H1 (cell line): ENCODE measurements at regions of chr12 and their contacts with region 1.

Region 1: GRCh38 chr12:52268212-52268611 is 6.2 kb upstream of the KRT86 start:
- DNase-seq: no peak
- H3K4me3 ChIP-seq: no peak overlapping the region
- H3K27ac ChIP-seq: no peak overlapping the region
- H3K4me1 ChIP-seq: no peaks in the 10 kb centered on the region
- H3K27me3 ChIP-seq: no peaks in the 10 kb centered on the region; a peak in 1 of 7 replicates
- CTCF ChIP-seq: no peak
- EP300 ChIP-seq: no peak
- POLR2A ChIP-seq: no peak
- RAD21 ChIP-seq: no peak

Region 2: DNA sequence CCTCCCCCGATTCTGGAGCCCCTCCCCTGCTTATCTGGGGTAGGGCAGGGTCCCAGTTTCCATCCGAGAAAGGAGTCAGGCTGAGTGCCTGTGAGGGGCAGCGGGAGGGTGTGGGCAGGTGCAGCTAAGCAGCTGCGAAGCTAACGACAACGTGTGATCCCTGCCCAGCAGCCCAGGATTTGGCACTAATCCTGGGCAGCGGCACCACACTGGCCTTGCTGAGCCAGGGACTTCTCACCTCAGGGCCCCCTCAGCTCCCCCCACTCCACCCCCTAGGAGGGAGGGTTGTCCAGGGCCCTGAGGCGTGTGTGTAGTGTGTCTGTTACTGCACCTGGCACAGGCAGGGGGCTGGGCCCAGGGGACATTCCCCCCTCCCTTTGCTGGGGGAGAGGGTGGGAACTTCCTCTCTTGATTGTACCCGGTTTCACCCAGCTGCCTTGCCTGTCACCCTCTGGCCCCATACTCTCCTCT is 186.9 kb before region 1 on chr12:
- CTCF ChIA-PET with region 1: no interaction called
- POLR2A ChIA-PET with region 1: no interaction called
- DNase-seq: no peak
- H3K4me3 ChIP-seq: no peak overlapping the region
- H3K27ac ChIP-seq: no peak overlapping the region
- H3K4me1 ChIP-seq: peaks cover 5 to 37% (median 14%) of the 10 kb centered on the region in 4 experiments; a peak in 6 of 7 replicates
- H3K27me3 ChIP-seq: peaks cover 0 to 14% (median 1%) of the 10 kb centered on the region in 4 experiments; a peak in 5 of 7 replicates
- CTCF ChIP-seq: no peak
- EP300 ChIP-seq: no peak
- POLR2A ChIP-seq: no peak
- RAD21 ChIP-seq: no peak

Region 3: GRCh38 chr12:52249051-52249461 is 19.2 kb before region 1 on chr12:
- CTCF ChIA-PET with region 1: interaction called, 40 read pairs
- POLR2A ChIA-PET with region 1: no interaction called
- DNase-seq: no peak
- H3K4me3 ChIP-seq: no peak overlapping the region
- H3K27ac ChIP-seq: no peak overlapping the region
- H3K4me1 ChIP-seq: peaks cover 0 to 12% (median 5%) of the 10 kb centered on the region in 4 experiments; a peak in 5 of 7 replicates
- H3K27me3 ChIP-seq: peaks cover 4 to 29% (median 23%) of the 10 kb centered on the region in 4 experiments
- CTCF ChIP-seq: no peak
- EP300 ChIP-seq: no peak
- POLR2A ChIP-seq: no peak
- RAD21 ChIP-seq: no peak

Region 4: GRCh38 chr12:52285172-52285745 is 17.0 kb after region 1 on chr12:
- CTCF ChIA-PET with region 1: interaction called, 87 read pairs
- POLR2A ChIA-PET with region 1: no interaction called
- DNase-seq: no peak
- H3K4me3 ChIP-seq: no peak overlapping the region
- H3K27ac ChIP-seq: no peak overlapping the region
- H3K4me1 ChIP-seq: peaks cover 0 to 2% (median 0%) of the 10 kb centered on the region in 4 experiments; a peak in 1 of 7 replicates
- H3K27me3 ChIP-seq: no peaks in the 10 kb centered on the region
- CTCF ChIP-seq: no peak
- EP300 ChIP-seq: no peak
- POLR2A ChIP-seq: no peak
- RAD21 ChIP-seq: no peak